Heart left ventricle (tissue), 16 donors: ENCODE measurements at regions of chr9 and their contacts with region 1.

Region 1: GRCh38 chr9:129125476-129125875 is 14.3 kb downstream of the PTPA start:
- DNase-seq: no peak
- ATAC-seq: peak in 2 of 4 donors; percentile 12 to 37
- H3K4me3 ChIP-seq: no peak overlapping the region
- H3K27ac ChIP-seq: no peak overlapping the region
- H3K4me1 ChIP-seq: peaks cover 0 to 14% (median 0%) of the 10 kb centered on the region in 12 donors
- H3K27me3 ChIP-seq: no peaks in the 10 kb centered on the region
- CTCF ChIP-seq: no peak
- POLR2A ChIP-seq: no peak

Region 2: DNA sequence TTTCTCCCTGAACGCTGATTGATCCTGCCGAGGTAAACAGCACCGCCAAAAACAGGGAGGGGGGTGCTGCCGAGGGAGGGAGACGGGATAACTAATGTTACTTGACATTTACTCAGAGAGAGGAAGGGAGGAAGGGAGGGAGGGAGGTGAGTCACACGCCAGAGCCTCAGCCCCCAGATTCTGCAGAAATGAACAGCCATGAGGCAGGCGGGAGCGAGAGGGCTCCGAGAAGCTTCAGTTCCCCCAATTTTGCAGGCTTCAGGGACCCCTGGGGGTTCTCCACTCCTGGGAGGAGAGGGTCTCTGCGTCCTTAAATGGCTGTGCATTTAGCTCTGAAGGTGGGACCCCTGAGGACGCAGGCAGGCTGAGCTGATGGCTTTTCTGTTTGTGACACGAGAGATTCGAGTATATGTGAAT is 111.7 kb after region 1 on chr9:
- intact Hi-C with region 1: no loop called
- DNase-seq: peak in 3 of 5 donors; percentile 17 to 34 (median 33)
- ATAC-seq: peak in 3 of 4 donors; percentile 35 to 61 (median 59)
- H3K4me3 ChIP-seq: peak overlapping the region in 1 of 12 donors; percentile 15
- H3K27ac ChIP-seq: no peak overlapping the region
- H3K4me1 ChIP-seq: peaks cover 0 to 16% (median 0%) of the 10 kb centered on the region in 12 donors
- H3K27me3 ChIP-seq: no peaks in the 10 kb centered on the region
- CTCF ChIP-seq: no peak
- POLR2A ChIP-seq: no peak

Region 3: GRCh38 chr9:129796029-129796910 is 670.8 kb after region 1 on chr9:
- intact Hi-C with region 1: loop called in 2 of 10 experiments (anchors 5 to 10 kb)
- DNase-seq: no peak
- ATAC-seq: no peak
- H3K4me3 ChIP-seq: no peak overlapping the region
- H3K27ac ChIP-seq: no peak overlapping the region
- H3K4me1 ChIP-seq: no peaks in the 10 kb centered on the region
- H3K27me3 ChIP-seq: peaks cover 0 to 10% (median 0%) of the 10 kb centered on the region in 9 donors
- CTCF ChIP-seq: no peak
- POLR2A ChIP-seq: no peak